Naive thymus-derived CD4-positive, alpha-beta T cell (primary cell): ENCODE measurements at regions of chr7 and their contacts with region 1.

Region 1: GRCh38 chr7:23055582-23056178 is 41.8 kb upstream of the HYCC1 start:
- DNase-seq: peak in 8 of 9 donors; percentile 42 to 71 (median 64)
- ATAC-seq: peak; percentile 98
- H3K4me3 ChIP-seq: no peak overlapping the region
- H3K4me3 Mint-ChIP-seq: no peak overlapping the region
- H3K27ac ChIP-seq: no peak overlapping the region
- H3K27ac Mint-ChIP-seq: no peak overlapping the region
- H3K4me1 ChIP-seq: no peaks in the 10 kb centered on the region
- H3K4me1 Mint-ChIP-seq: peaks cover 0 to 10% (median 0%) of the 10 kb centered on the region in 7 donors
- H3K27me3 ChIP-seq: no peaks in the 10 kb centered on the region
- H3K27me3 Mint-ChIP-seq: peaks cover 0 to 7% (median 0%) of the 10 kb centered on the region in 5 donors

Region 2: GRCh38 chr7:22110227-22110839 is 945.3 kb before region 1 on chr7:
- CTCF ChIA-PET with region 1: no interaction called
- POLR2A ChIA-PET with region 1: no interaction called
- intact Hi-C with region 1: loop called in 1 of 2 experiments (anchors 2 kb)
- DNase-seq: peak; percentile 26 to 76 (median 64)
- ATAC-seq: peak; percentile 88
- H3K4me3 ChIP-seq: no peak overlapping the region
- H3K4me3 Mint-ChIP-seq: no peak overlapping the region
- H3K27ac ChIP-seq: no peak overlapping the region
- H3K27ac Mint-ChIP-seq: no peak overlapping the region
- H3K4me1 ChIP-seq: no peaks in the 10 kb centered on the region
- H3K4me1 Mint-ChIP-seq: no peaks in the 10 kb centered on the region
- H3K27me3 ChIP-seq: no peaks in the 10 kb centered on the region
- H3K27me3 Mint-ChIP-seq: peaks cover 0 to 5% (median 3%) of the 10 kb centered on the region in 5 donors

Region 3: GRCh38 chr7:22660732-22661131 is 394.9 kb before region 1 on chr7:
- CTCF ChIA-PET with region 1: interaction called, 3 read pairs
- POLR2A ChIA-PET with region 1: no interaction called
- intact Hi-C with region 1: loop called in 1 of 2 experiments (anchors 1 kb)
- DNase-seq: no peak
- ATAC-seq: no peak
- H3K4me3 ChIP-seq: no peak overlapping the region
- H3K4me3 Mint-ChIP-seq: no peak overlapping the region
- H3K27ac ChIP-seq: no peak overlapping the region
- H3K27ac Mint-ChIP-seq: no peak overlapping the region
- H3K4me1 ChIP-seq: peaks cover 0 to 4% of the 10 kb centered on the region in 2 donors
- H3K4me1 Mint-ChIP-seq: peaks cover 7 to 29% (median 16%) of the 10 kb centered on the region in 7 donors
- H3K27me3 ChIP-seq: no peaks in the 10 kb centered on the region
- H3K27me3 Mint-ChIP-seq: peaks cover 0 to 39% (median 0%) of the 10 kb centered on the region in 5 donors

Region 4: GRCh38 chr7:22782616-22783232 is 273.0 kb before region 1 on chr7:
- CTCF ChIA-PET with region 1: interaction called, 10 read pairs
- POLR2A ChIA-PET with region 1: no interaction called
- intact Hi-C with region 1: loop called (anchors 1 kb)
- DNase-seq: peak; percentile 39 to 73 (median 59)
- ATAC-seq: peak; percentile 90
- H3K4me3 ChIP-seq: no peak overlapping the region
- H3K4me3 Mint-ChIP-seq: no peak overlapping the region
- H3K27ac ChIP-seq: no peak overlapping the region
- H3K27ac Mint-ChIP-seq: no peak overlapping the region
- H3K4me1 ChIP-seq: no peaks in the 10 kb centered on the region
- H3K4me1 Mint-ChIP-seq: no peaks in the 10 kb centered on the region
- H3K27me3 ChIP-seq: no peaks in the 10 kb centered on the region
- H3K27me3 Mint-ChIP-seq: peaks cover 0 to 23% (median 0%) of the 10 kb centered on the region in 5 donors

Region 5: GRCh38 chr7:22934473-22935065 is 121.1 kb before region 1 on chr7:
- CTCF ChIA-PET with region 1: no interaction called
- POLR2A ChIA-PET with region 1: no interaction called
- intact Hi-C with region 1: loop called in 1 of 2 experiments (anchors 10 kb)
- DNase-seq: no peak
- ATAC-seq: no peak
- H3K4me3 ChIP-seq: no peak overlapping the region
- H3K4me3 Mint-ChIP-seq: no peak overlapping the region
- H3K27ac ChIP-seq: no peak overlapping the region
- H3K27ac Mint-ChIP-seq: no peak overlapping the region
- H3K4me1 ChIP-seq: no peaks in the 10 kb centered on the region
- H3K4me1 Mint-ChIP-seq: no peaks in the 10 kb centered on the region
- H3K27me3 ChIP-seq: no peaks in the 10 kb centered on the region
- H3K27me3 Mint-ChIP-seq: peaks cover 0 to 12% (median 5%) of the 10 kb centered on the region in 5 donors

Region 6: GRCh38 chr7:23672033-23672432 is 616.4 kb after region 1 on chr7:
- CTCF ChIA-PET with region 1: no interaction called
- POLR2A ChIA-PET with region 1: no interaction called
- intact Hi-C with region 1: no loop called
- DNase-seq: no peak
- ATAC-seq: no peak
- H3K4me3 ChIP-seq: no peak overlapping the region
- H3K4me3 Mint-ChIP-seq: no peak overlapping the region
- H3K27ac ChIP-seq: no peak overlapping the region
- H3K27ac Mint-ChIP-seq: no peak overlapping the region
- H3K4me1 ChIP-seq: no peaks in the 10 kb centered on the region
- H3K4me1 Mint-ChIP-seq: no peaks in the 10 kb centered on the region
- H3K27me3 ChIP-seq: no peaks in the 10 kb centered on the region
- H3K27me3 Mint-ChIP-seq: peaks cover 0 to 34% (median 14%) of the 10 kb centered on the region in 5 donors